Activated T-helper 1 cell treated with anti-CD3 and anti-CD28 coated beads, Interleukin-12 subunit alpha, Interleukin-12 subunit beta, Interleukin-2, Interleukin-4 antibody, amounts not matched to agents 30 ng/mL and 10 ng/mL and 1 ng/mL, durations not matched to agents 14 hours and 24 hours and 36 hours (primary cell): ENCODE measurements at regions of chr1 and their contacts with region 1.

Region 1: GRCh38 chr1:19762175-19762779 is 37.4 kb downstream of the TMCO4 start:
- DNase-seq: no peak
- H3K4me3 Mint-ChIP-seq: no peak overlapping the region
- H3K27ac Mint-ChIP-seq: no peak overlapping the region
- H3K4me1 Mint-ChIP-seq: peaks cover 18% of the 10 kb centered on the region
- H3K27me3 Mint-ChIP-seq: no peaks in the 10 kb centered on the region

Region 2: DNA sequence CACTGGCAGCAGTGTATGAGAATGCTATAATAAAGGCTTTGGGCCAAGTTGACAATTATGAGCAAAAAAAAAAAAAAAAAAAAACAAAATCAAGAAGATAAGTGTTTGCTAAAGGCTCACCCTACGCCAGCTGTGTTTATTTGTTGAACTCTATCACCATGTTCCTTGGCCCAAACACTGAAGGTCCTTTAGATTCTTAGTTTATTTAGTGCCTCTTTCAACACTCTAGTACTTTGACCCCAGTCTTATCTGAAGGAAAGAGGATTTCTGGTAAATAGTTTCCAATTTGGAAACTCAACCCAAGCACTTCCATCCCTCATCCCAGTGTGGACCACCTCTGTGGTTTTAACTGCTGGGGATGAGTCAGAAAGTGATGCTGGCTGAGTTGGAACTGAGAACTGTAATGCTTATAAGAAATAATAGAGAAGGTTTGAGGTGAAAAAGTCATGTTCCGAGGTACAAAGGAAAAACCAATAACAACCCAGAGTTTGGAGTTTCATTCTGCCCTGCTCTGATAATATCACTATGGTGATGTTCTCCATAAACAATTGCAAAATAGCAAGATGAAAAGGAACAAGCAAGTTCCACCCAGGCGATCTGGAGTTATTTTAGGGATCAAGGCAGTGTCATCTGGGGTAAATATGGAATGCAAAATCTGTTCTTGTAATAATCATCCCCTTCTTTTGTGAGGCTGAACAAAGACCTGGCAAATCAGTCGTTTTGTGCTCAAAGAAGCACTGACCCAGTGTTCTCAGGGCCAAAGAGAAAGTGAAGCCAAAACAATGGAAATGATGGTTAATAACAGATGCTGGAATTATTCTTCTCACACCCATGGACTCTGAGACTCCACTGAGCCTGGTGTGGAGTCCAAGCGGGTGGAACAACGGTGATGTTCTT is 257.2 kb before region 1 on chr1:
- intact Hi-C with region 1: no loop called
- DNase-seq: no peak
- H3K4me3 Mint-ChIP-seq: no peak overlapping the region
- H3K27ac Mint-ChIP-seq: no peak overlapping the region
- H3K4me1 Mint-ChIP-seq: peaks cover 27% of the 10 kb centered on the region
- H3K27me3 Mint-ChIP-seq: no peaks in the 10 kb centered on the region

Region 3: GRCh38 chr1:19715334-19716203 is 46.7 kb before region 1 on chr1:
- intact Hi-C with region 1: loop called (anchors 5 kb)
- DNase-seq: peak; percentile 75
- H3K4me3 Mint-ChIP-seq: no peak overlapping the region
- H3K27ac Mint-ChIP-seq: no peak overlapping the region
- H3K4me1 Mint-ChIP-seq: peaks cover 17% of the 10 kb centered on the region
- H3K27me3 Mint-ChIP-seq: no peaks in the 10 kb centered on the region

Region 4: DNA sequence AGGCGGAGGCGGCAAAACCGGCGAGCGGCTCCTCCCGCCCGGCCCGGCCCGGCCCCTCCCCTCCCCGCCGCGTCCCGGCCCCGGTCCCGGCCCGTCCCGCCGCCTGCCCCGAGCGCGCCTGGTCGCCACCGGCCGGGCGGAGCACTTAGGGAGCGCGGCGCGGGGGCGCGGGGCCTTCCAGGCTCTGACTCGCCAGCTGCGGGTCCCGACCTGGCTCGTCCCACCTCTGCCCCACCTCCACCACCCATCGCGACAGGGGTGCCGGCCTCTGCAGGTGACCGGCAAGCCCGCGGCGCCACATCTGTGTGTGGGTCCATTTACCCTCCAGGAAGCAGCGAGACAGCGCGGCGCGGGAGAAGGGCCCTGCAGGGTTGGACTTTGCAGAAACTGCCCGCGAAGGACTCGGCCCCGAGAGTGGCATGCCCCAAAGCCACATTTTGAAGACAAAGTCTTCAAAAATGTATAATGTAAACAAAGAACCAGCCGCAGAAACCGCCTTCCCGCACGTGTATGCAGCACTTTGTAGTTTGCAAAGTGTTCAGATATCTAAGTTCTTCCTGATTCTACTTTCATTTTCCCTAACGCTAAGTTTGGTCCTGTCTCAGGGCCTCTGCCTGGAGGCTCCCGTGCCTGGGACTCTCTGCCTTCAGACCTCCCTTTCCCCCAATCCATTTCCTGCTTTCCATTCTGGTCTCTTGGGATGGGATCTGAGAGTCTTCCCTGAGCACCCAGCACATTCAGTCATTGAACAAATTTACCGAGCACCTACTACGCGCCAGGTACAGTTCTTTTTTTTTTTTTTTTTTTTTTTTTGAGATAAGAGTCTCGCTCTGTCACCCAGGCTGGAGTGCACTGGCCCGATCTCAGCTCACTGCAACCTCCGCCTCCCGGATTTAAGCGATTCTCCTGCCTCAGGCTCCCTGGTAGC is 37.9 kb after region 1 on chr1 and contains the start of gene TMCO4:
- intact Hi-C with region 1: loop called (anchors 1 kb)
- DNase-seq: peak; percentile 34
- H3K4me3 Mint-ChIP-seq: peak within 1 kb of the TSS; percentile 86
- H3K27ac Mint-ChIP-seq: peak within 1 kb of the TSS; percentile 91
- H3K4me1 Mint-ChIP-seq: peaks cover 28% of the 10 kb centered on the region
- H3K27me3 Mint-ChIP-seq: peaks cover 15% of the 10 kb centered on the region
- total RNA-seq, gene TMCO4: 14.0 and 15.1 TPM in 2 replicates

Region 5: GRCh38 chr1:19811206-19811851 is 49.1 kb after region 1 on chr1:
- intact Hi-C with region 1: loop called (anchors 1 kb)
- DNase-seq: peak; percentile 13
- H3K4me3 Mint-ChIP-seq: no peak overlapping the region
- H3K27ac Mint-ChIP-seq: no peak overlapping the region
- H3K4me1 Mint-ChIP-seq: no peaks in the 10 kb centered on the region
- H3K27me3 Mint-ChIP-seq: peaks cover 2% of the 10 kb centered on the region

Region 6: GRCh38 chr1:19957779-19958178 is 195.5 kb after region 1 on chr1:
- intact Hi-C with region 1: no loop called
- DNase-seq: no peak
- H3K4me3 Mint-ChIP-seq: no peak overlapping the region
- H3K27ac Mint-ChIP-seq: no peak overlapping the region
- H3K4me1 Mint-ChIP-seq: no peaks in the 10 kb centered on the region
- H3K27me3 Mint-ChIP-seq: peaks cover 7% of the 10 kb centered on the region

Region 7: DNA sequence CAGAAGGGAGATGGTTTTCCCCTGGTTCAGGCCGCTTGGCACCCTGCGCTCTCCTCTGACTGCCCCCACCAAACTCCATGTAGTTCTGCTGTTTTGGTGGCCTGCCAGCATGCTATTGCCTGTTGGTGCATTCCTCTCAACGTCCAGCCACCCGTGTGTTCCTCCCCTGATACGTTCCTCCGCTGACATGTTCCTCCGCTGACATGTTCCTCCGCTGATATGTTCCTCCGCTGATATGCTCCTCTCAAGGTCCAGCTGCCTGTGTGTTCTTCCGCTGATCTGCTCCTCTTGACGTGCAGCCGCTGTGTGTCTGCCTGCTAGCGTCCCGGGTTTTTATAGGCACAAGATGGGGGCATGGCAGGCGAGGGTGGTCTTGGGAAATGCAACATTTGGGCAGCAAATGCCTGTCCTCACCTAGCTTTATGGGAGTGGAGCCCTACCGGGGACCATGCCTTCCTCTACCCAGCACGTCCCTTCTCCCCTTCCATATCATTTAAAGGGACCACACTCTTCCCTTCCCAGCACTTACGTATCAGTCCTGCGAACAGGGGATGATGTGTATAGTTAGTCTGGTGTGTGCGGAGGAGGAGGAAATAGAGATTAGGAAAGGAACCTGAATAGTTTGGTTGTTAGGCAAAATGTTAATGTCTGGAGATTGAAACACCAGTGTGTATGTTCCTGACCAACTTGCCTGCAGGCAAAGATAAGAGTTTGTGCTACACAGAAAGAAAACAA is 267.1 kb after region 1 on chr1:
- intact Hi-C with region 1: no loop called
- DNase-seq: no peak
- H3K4me3 Mint-ChIP-seq: no peak overlapping the region
- H3K27ac Mint-ChIP-seq: no peak overlapping the region
- H3K4me1 Mint-ChIP-seq: no peaks in the 10 kb centered on the region
- H3K27me3 Mint-ChIP-seq: peaks cover 7% of the 10 kb centered on the region